Adrenal gland (tissue), 19 donors: ENCODE measurements at regions of chr2 and their contacts with region 1.

Region 1: GRCh38 chr2:56009758-56010458 is 86.3 kb upstream of the EFEMP1 start:
- DNase-seq: no peak
- H3K4me3 ChIP-seq: no peak overlapping the region
- H3K27ac ChIP-seq: no peak overlapping the region
- H3K4me1 ChIP-seq: no peaks in the 10 kb centered on the region
- H3K27me3 ChIP-seq: no peaks in the 10 kb centered on the region
- CTCF ChIP-seq: peak; percentile 19 to 72 (median 62)
- POLR2A ChIP-seq: no peak

Region 2: DNA sequence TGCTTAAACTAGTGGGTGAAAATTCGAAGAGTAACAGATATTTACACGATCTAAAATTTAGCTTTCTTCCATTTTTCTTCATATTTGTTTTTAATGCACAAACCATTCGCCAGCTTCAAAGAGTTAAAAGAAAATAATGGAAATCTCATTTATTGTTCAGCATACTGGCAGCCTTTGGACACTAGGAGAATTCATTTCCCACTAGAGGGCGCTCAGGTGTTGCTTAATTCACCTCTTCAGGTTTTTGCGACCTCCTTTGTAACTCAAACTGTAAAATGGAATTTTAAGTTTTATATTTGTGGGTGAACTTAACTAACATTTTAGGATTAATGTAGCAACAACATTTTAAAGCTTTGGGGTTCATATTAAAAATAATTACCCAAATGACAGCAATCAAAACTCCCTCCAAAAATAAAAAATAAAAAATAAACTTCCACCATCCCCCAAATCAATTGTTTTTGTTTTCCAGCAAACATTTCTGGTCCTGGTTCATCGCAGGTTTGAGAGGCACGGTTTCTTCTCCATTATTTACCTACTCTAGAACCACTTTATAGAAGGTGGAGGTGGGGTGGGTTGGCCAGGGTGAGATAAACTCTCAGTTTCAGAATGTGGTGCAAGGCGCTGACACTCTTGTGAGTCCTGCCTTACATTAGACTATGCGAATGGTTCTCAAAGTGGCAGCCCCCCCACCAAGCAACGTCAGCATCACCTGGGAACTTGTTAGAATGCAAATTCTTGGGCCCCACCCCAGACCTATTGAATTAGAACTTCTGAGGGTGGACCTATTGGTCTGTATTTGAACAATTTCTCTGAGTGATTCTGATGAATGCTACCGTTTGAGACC is 291.5 kb before region 1 on chr2:
- intact Hi-C with region 1: loop called (anchors 2 to 10 kb)
- DNase-seq: peak; percentile 52 to 79 (median 59)
- H3K4me3 ChIP-seq: no peak overlapping the region
- H3K27ac ChIP-seq: no peak overlapping the region
- H3K4me1 ChIP-seq: no peaks in the 10 kb centered on the region
- H3K27me3 ChIP-seq: no peaks in the 10 kb centered on the region
- CTCF ChIP-seq: peak; percentile 71 to 86 (median 78)
- POLR2A ChIP-seq: no peak

Region 3: GRCh38 chr2:55771612-55772011 is 238.3 kb before region 1 on chr2:
- intact Hi-C with region 1: loop called in 1 of 2 experiments (anchors 5 kb)
- DNase-seq: no peak
- H3K4me3 ChIP-seq: no peak overlapping the region
- H3K27ac ChIP-seq: no peak overlapping the region
- H3K4me1 ChIP-seq: no peaks in the 10 kb centered on the region
- H3K27me3 ChIP-seq: no peaks in the 10 kb centered on the region
- CTCF ChIP-seq: peak; percentile 56 to 91 (median 69)
- POLR2A ChIP-seq: no peak

Region 4: GRCh38 chr2:55961318-55961911 is 48.5 kb before region 1 on chr2:
- intact Hi-C with region 1: loop called in 1 of 2 experiments (anchors 5 kb)
- DNase-seq: peak in 2 of 7 donors; percentile 23 to 35
- H3K4me3 ChIP-seq: no peak overlapping the region
- H3K27ac ChIP-seq: no peak overlapping the region
- H3K4me1 ChIP-seq: peaks cover 6 to 11% of the 10 kb centered on the region in 2 donors
- H3K27me3 ChIP-seq: no peaks in the 10 kb centered on the region
- CTCF ChIP-seq: peak; percentile 45 to 71 (median 60)
- POLR2A ChIP-seq: no peak

Region 5: GRCh38 chr2:56132138-56132537 is 122.2 kb after region 1 on chr2:
- intact Hi-C with region 1: no loop called
- DNase-seq: no peak
- H3K4me3 ChIP-seq: no peak overlapping the region
- H3K27ac ChIP-seq: no peak overlapping the region
- H3K4me1 ChIP-seq: no peaks in the 10 kb centered on the region
- H3K27me3 ChIP-seq: peaks cover 5% of the 10 kb centered on the region
- CTCF ChIP-seq: peak in 5 of 6 experiments; percentile 40 to 69 (median 57)
- POLR2A ChIP-seq: no peak